ENCODE measurements at regions of chrX and their contacts with region 1.

Region 1: GRCh38 chrX:19887911-19888879 is 795 bp upstream of the SH3KBP1 start:
- DNase-seq: peak; percentile 54
- ATAC-seq: peak; percentile 42
- H3K4me3 Mint-ChIP-seq: peak overlapping the region; percentile 72
- H3K27ac Mint-ChIP-seq: peak overlapping the region; percentile 87
- H3K4me1 Mint-ChIP-seq: peaks cover 44% of the 10 kb centered on the region
- H3K27me3 Mint-ChIP-seq: no peaks in the 10 kb centered on the region

Region 2: DNA sequence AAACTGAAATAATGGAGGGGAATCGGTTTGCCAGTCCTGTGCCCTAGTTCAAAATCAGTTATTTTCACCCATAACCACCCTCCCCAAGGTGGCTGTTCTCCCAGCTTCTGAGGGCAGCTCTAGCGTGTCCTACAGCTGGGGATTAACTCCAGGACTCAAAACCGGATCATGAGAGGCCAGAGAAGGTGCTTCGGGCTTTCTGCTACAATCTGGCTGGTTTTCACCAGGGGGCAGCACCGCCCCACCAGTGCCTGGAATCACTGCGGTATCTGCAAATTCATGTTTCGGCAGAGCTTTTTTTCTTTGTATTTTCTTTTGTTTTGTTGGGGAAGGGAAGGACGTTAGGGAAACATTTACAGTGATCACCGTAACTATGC is 516.0 kb before region 1 on chrX:
- CTCF ChIA-PET with region 1: no interaction called
- POLR2A ChIA-PET with region 1: no interaction called
- intact Hi-C with region 1: loop called (anchors 2 to 5 kb)
- DNase-seq: peak; percentile 79
- ATAC-seq: peak; percentile 85
- H3K4me3 Mint-ChIP-seq: peak overlapping the region; percentile 69
- H3K27ac Mint-ChIP-seq: peak overlapping the region; percentile 81
- H3K4me1 Mint-ChIP-seq: peaks cover 5% of the 10 kb centered on the region
- H3K27me3 Mint-ChIP-seq: no peaks in the 10 kb centered on the region

Region 3: GRCh38 chrX:19593690-19594089 is 294.5 kb before region 1 on chrX:
- CTCF ChIA-PET with region 1: interaction called, 4 read pairs
- POLR2A ChIA-PET with region 1: no interaction called
- intact Hi-C with region 1: loop called (anchors 1 to 2 kb)
- DNase-seq: peak; percentile 21
- ATAC-seq: no peak
- H3K4me3 Mint-ChIP-seq: no peak overlapping the region
- H3K27ac Mint-ChIP-seq: no peak overlapping the region
- H3K4me1 Mint-ChIP-seq: peaks cover 14% of the 10 kb centered on the region
- H3K27me3 Mint-ChIP-seq: no peaks in the 10 kb centered on the region

Region 4: GRCh38 chrX:19739683-19740082 is 148.5 kb before region 1 on chrX:
- CTCF ChIA-PET with region 1: interaction called, 3 read pairs
- POLR2A ChIA-PET with region 1: no interaction called
- intact Hi-C with region 1: loop called (anchors 1 to 2 kb)
- DNase-seq: peak; percentile 61
- ATAC-seq: peak; percentile 51
- H3K4me3 Mint-ChIP-seq: no peak overlapping the region
- H3K27ac Mint-ChIP-seq: peak overlapping the region; percentile 66
- H3K4me1 Mint-ChIP-seq: peaks cover 81% of the 10 kb centered on the region
- H3K27me3 Mint-ChIP-seq: no peaks in the 10 kb centered on the region

Region 5: GRCh38 chrX:19799319-19800182 is 88.6 kb before region 1 on chrX:
- CTCF ChIA-PET with region 1: no interaction called
- POLR2A ChIA-PET with region 1: no interaction called
- intact Hi-C with region 1: loop called (anchors 2 to 5 kb)
- DNase-seq: peak; percentile 65
- ATAC-seq: peak; percentile 78
- H3K4me3 Mint-ChIP-seq: peak overlapping the region; percentile 84
- H3K27ac Mint-ChIP-seq: peak overlapping the region; percentile 98
- H3K4me1 Mint-ChIP-seq: peaks cover 66% of the 10 kb centered on the region
- H3K27me3 Mint-ChIP-seq: no peaks in the 10 kb centered on the region